Heart right ventricle (tissue), 16 donors: ENCODE measurements at regions of chr7 and their contacts with region 1.

Region 1: GRCh38 chr7:71414490-71414889 is 282.5 kb downstream of the GALNT17 start:
- DNase-seq: peak; percentile 65 to 70
- ATAC-seq: peak; percentile 45 to 79 (median 73)
- H3K4me3 ChIP-seq: no peak overlapping the region
- H3K27ac ChIP-seq: peak overlapping the region in 3 of 10 donors; percentile 34 to 48 (median 35)
- H3K4me1 ChIP-seq: peaks cover 0 to 17% (median 8%) of the 10 kb centered on the region in 9 donors
- H3K27me3 ChIP-seq: no peaks in the 10 kb centered on the region
- CTCF ChIP-seq: no peak

Region 2: GRCh38 chr7:71266912-71267311 is 147.6 kb before region 1 on chr7:
- intact Hi-C with region 1: loop called in 1 of 10 experiments (anchors 10 kb)
- DNase-seq: no peak
- ATAC-seq: no peak
- H3K4me3 ChIP-seq: no peak overlapping the region
- H3K27ac ChIP-seq: no peak overlapping the region
- H3K4me1 ChIP-seq: peaks cover 0 to 24% (median 0%) of the 10 kb centered on the region in 9 donors
- H3K27me3 ChIP-seq: no peaks in the 10 kb centered on the region
- CTCF ChIP-seq: no peak

Region 3: GRCh38 chr7:71661671-71662224 is 247.3 kb after region 1 on chr7:
- intact Hi-C with region 1: loop called in 1 of 10 experiments (anchors 5 kb)
- DNase-seq: peak; percentile 56 to 60
- ATAC-seq: peak; percentile 68 to 92 (median 88)
- H3K4me3 ChIP-seq: no peak overlapping the region
- H3K27ac ChIP-seq: peak overlapping the region in 5 of 10 donors; percentile 12 to 59 (median 28)
- H3K4me1 ChIP-seq: peaks cover 0 to 21% (median 4%) of the 10 kb centered on the region in 9 donors
- H3K27me3 ChIP-seq: no peaks in the 10 kb centered on the region
- CTCF ChIP-seq: no peak